ENCODE measurements at regions of chr3 and their contacts with region 1.

Region 1: GRCh38 chr3:138594150-138594934 is at the start of gene CEP70:
- DNase-seq: peak; percentile 95 to 96 (median 96)
- ATAC-seq: peak; percentile 95
- H3K4me3 ChIP-seq: peak within 1 kb of the TSS; percentile 11
- H3K4me1 ChIP-seq: peaks cover 29% of the 10 kb centered on the region
- CTCF ChIP-seq: peak; percentile 66
- total RNA-seq, gene CEP70: 29.7 to 56.9 (median 37.9) TPM

Region 2: GRCh38 chr3:138023754-138024153 is 570.6 kb before region 1 on chr3:
- intact Hi-C with region 1: no loop called
- DNase-seq: no peak
- ATAC-seq: no peak
- H3K4me3 ChIP-seq: no peak overlapping the region
- H3K4me1 ChIP-seq: no peaks in the 10 kb centered on the region
- CTCF ChIP-seq: no peak

Region 3: DNA sequence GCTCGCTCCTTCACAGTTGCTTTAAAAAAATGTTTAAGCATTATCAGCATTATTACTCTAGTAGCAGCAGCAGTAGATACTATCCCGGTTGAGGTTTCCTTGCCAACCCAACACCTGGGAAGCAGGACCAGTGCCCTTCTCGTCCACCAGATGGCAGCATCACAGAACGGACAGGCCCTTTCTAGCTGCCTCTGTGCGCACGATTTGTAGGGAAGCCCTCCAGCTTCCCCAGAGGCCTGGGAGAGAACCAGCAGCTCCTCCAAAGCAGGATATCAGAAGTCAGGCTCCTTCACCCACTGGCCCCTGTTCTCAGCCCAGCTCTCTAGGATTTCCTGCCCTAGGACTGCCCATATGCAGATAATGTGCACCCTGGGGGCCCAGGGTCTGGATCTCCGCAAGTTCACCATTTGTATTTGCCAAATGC is 176.8 kb before region 1 on chr3:
- intact Hi-C with region 1: loop called in 1 of 2 experiments (anchors 10 kb)
- DNase-seq: peak in 2 of 3 donors; percentile 80 to 84
- ATAC-seq: peak; percentile 93
- H3K4me3 ChIP-seq: no peak overlapping the region
- H3K4me1 ChIP-seq: no peaks in the 10 kb centered on the region
- CTCF ChIP-seq: peak; percentile 77

Region 4: DNA sequence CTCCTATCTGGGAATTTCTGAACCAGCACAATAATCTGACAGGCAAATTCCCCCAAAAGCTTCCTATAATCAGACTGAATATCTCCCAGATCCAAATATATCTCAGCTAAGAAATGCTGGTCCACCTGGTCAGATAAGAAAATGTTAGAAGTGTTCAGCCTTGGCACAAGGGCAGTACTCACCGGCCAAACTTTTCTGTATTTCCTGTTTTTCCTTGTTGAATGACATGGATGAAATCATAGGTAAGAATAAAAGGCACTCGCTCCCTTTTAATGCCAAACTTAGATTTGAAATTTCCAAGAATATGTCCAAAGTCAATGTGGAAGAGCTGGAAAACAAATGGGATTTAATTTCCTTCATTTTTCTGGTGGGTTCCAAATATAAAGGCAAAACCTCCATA is 63.2 kb after region 1 on chr3:
- intact Hi-C with region 1: no loop called
- DNase-seq: no peak
- ATAC-seq: no peak
- H3K4me3 ChIP-seq: no peak overlapping the region
- H3K4me1 ChIP-seq: no peaks in the 10 kb centered on the region
- CTCF ChIP-seq: no peak